ENCODE measurements at regions of chr6 and their contacts with region 1.

Region 1: DNA sequence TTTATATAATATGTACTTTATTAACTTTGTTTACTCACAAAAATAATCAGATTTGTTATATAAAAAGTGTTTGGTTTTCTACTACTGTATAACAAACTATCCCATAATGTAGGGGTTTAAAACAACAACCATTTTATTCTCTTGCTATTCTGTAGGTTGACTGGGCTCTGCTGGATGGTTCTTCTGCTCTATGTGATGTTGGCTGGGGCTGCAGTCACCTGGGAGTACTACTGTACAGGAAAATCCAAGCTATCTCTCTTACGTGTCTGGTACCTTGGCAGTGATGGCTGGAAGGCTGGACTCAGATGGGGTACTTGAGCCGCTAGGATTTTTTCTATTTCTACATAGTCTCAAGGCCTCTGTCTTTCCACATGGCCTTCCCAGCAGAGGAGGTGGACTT is 44.0 kb upstream of the UBR2 start:
- DNase-seq: no peak
- H3K4me3 ChIP-seq: no peak overlapping the region
- H3K27ac ChIP-seq: no peak overlapping the region
- H3K4me1 ChIP-seq: no peaks in the 10 kb centered on the region
- CTCF ChIP-seq: no peak

Region 2: DNA sequence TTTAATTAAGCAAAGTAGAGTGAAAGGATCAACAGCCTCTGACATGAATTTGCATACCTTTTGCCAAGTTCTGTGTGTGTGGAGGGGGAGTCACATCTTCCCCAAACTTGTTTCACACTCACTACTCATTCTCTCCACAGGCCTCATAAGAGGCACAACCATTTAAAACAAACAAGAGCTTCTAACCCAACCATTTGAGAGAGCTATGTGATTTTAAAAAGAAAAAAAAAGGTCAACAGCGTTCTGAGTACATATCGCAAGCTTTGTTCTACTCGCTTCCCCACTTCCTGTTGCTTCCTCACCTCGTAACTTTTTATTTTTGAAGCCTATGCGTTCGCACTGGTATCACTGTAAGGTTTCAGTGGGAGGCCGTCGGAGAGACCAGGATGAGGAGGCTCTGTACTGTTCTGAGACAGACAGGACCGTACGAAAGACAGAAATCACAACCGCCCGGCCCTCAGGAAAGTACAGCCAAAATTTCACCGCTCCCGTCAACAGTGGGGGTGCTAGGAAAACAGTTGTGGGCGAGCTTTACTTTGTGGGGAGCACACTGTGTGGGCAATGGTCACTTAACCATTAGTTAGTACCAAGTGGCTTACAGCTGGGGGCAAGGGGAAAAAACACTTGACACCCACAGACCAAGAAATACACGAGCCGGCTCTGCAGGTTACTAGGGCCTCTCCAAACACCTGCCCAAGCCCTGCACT is 129.4 kb before region 1 on chr6:
- CTCF ChIA-PET with region 1: no interaction called
- POLR2A ChIA-PET with region 1: no interaction called
- intact Hi-C with region 1: no loop called
- DNase-seq: peak; percentile 21
- H3K4me3 ChIP-seq: peak overlapping the region; percentile 21
- H3K27ac ChIP-seq: no peak overlapping the region
- H3K4me1 ChIP-seq: peaks cover 20% of the 10 kb centered on the region
- CTCF ChIP-seq: no peak

Region 3: DNA sequence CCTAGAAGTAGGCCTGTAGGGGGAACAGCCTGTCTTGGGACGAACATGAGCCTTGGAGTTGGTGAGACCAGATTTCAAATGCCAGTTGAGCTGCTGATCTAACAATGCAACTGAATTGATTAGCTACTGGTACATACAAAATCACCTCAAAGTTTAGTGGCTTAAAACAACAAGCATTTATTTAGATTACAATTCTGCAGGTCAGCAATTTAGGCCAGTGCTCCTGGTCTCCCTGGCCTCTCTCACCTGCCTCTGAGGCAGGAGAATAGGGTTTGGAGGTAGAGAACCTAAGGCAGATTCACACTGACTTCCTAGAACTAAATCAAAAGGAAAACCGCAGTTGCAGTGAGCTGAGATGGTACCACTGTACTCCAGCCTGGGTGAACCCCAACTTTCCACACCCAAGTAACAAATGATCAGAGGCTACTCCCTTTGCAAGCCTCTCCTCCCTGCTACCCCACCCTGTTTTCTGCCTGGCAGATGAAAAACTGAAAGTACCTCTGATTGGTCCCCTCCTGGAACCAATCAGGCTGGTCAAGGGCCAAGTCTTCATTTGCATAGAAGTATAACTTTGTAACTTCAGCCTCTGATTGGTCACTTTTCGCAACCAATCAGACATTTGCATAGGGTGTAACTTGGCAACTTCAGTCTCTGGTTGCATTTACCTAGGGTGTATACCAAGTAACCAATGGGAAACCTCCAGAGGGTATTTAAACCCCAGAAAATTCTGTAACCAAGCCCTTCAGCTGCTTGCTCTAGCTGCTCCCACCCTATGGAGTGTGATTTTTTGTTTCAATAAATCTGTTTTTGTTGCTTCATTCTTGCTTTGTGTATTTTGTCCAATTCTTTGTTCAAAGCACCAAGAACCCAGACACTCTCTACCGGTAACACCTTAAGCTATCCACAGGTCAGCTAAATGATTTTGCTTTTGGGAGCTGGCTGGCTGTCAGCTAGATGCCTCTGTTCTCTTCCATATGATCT is 36.0 kb after region 1 on chr6:
- CTCF ChIA-PET with region 1: no interaction called
- POLR2A ChIA-PET with region 1: no interaction called
- intact Hi-C with region 1: loop called (anchors 1 kb)
- DNase-seq: peak; percentile 30
- H3K4me3 ChIP-seq: no peak overlapping the region
- H3K27ac ChIP-seq: no peak overlapping the region
- H3K4me1 ChIP-seq: no peaks in the 10 kb centered on the region
- CTCF ChIP-seq: no peak

Region 4: DNA sequence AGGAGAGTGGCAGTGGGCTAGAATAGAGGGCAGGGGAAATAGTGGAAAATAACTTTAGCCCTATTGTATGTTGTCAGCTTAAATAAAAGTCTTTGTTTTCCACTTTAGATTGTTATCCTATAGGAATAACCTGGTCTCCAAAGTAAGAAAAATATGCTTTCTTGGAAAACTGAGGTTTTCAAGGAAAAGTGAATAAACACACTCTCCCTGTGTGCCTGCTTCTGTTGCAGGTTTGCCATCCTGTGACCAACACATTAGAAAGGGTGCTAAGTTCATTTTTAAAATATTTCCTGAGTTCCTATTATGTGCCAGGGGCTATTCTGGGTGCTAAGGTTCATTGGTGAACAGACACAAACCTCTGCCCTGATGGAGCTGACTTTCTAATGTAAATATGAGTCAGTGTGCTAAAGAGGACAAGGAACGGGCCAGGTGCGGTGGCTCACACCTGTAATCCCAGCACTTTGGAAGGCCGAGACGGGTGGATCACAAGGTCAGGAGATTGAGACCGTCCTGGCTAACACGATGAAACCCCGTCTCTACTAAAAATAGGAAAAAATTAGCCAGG is 285.6 kb after region 1 on chr6:
- CTCF ChIA-PET with region 1: no interaction called
- POLR2A ChIA-PET with region 1: no interaction called
- intact Hi-C with region 1: no loop called
- DNase-seq: no peak
- H3K4me3 ChIP-seq: no peak overlapping the region
- H3K27ac ChIP-seq: no peak overlapping the region
- H3K4me1 ChIP-seq: no peaks in the 10 kb centered on the region
- CTCF ChIP-seq: no peak

Measured in OCI-LY7 (cell line).